Activated B cell treated with CpG ODN at 0.5 μM for 24 hours (primary cell): ENCODE measurements at regions of chr10 and their contacts with region 1.

Region 1: DNA sequence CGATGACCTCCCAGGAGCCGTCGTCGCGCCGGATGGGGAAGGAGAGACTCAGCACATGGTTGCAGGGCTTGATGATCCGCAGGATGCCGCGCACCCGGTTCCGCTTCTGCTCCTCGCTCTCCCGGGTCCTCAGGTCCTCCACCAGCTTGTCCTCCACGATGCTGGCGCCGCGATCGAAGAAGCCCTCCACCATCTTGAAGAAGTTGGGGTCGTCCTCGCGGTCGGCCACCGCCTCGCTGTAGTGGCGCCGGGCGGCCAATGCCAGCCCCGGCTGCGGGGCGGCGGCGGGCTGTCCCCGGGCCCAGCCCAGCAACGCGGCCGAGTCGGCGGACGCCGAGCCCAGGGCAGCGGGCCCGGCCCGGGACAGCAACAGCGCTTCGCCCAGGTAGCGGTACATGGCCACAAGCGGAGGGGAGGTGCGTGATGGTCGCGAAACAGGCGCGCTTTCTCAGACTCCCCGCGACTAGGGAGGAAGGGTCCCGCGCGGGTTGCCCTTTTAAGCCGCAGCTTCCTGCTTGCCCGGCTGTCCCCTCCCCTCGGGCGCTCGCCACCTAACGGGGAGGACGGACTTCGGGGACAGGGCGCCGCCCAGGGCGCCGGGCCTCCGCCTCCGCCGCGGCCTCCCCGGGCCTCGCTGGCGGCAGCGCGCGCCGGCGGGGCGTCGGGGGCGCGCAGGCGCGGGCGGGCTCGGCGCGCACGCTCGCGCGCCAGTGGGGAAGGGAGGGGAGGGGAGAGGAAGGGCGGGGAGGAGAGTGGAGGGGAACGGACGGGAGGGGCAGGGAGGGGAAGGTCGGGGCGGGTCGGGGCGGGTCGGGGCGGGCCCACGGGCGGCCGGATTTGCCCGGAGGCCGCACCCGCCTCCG is at the starts of genes GLUD1 and SHLD2:
- DNase-seq: peak; percentile 89
- ATAC-seq: peak; percentile 76
- H3K4me3 Mint-ChIP-seq: peak within 1 kb of the TSS; percentile 92
- H3K27ac Mint-ChIP-seq: peak within 1 kb of the TSS; percentile 91
- H3K4me1 Mint-ChIP-seq: peaks cover 42% of the 10 kb centered on the region
- H3K27me3 Mint-ChIP-seq: no peaks in the 10 kb centered on the region
- CTCF ChIP-seq: no peak
- total RNA-seq, gene GLUD1: 96.5 and 98.4 TPM in 2 replicates
- total RNA-seq, gene SHLD2: 29.3 and 29.6 TPM in 2 replicates

Region 2: DNA sequence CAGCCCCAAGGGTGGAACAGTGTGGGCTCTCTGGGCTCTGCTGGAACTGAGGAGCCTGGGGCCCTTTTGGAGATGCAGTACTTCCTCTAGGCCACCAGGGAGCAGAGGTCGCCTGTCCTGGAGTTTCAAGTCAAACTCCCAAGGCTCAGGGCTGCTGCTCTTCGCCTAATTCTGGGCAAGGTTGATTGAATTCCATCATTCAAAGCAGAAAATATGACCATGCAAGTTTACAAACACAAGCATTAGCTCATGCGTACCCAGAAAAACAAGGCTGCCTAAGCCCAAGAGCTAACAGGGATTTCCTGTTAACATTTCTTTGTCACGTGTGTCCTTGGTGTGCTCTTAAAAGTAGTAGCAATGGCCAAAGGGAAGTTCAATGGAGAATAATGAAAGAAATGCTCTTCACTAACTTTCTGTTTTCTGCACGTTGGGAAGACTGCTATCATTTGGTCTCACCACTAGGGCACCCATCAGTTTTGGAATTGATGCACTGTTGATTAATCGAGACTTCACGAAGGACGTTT is 406.1 kb before region 1 on chr10:
- CTCF ChIA-PET with region 1: no interaction called
- POLR2A ChIA-PET with region 1: no interaction called
- intact Hi-C with region 1: no loop called
- DNase-seq: peak; percentile 32
- ATAC-seq: peak; percentile 93
- H3K4me3 Mint-ChIP-seq: peak overlapping the region; percentile 24
- H3K27ac Mint-ChIP-seq: no peak overlapping the region
- H3K4me1 Mint-ChIP-seq: peaks cover 2% of the 10 kb centered on the region
- H3K27me3 Mint-ChIP-seq: peaks cover 6% of the 10 kb centered on the region
- CTCF ChIP-seq: peak; percentile 59

Region 3: DNA sequence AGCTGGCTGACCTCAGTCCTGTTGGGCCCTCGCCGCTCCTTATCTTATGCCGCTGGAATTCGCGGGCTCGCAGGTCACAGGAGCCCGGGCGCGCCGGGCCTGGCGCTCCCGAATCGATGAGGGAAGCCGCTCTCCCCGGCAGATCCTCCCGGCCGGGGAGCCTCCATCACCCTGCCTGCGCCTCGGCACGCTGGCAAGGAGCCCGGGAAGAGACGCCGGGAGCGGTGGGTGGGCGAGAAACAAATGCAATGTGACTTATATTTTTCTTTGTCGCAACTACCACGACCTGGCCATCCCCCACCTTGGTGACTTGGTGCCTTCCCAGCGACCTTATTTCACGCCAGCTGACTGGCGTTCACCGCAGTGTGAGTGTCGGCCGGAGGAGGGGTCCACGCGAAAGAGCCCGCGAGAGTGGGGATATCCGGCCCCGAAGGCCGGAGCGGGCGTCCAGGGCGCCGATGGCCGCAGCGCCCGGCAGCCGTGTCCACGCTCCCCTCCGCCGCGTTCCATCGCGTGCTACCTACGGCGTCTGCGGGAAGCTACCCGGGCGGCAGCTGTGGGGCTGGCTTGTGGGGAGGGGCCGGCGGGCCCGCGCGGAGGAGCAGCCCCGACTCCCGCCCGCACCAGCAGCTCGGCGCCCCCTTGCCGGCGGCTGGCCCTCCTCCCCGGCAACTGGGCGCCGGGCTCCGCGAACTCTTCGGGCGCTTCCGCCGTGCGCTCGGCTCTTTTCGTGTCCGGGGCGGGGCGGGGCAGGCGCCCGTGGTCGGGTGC is 338.7 kb before region 1 on chr10:
- CTCF ChIA-PET with region 1: no interaction called
- POLR2A ChIA-PET with region 1: no interaction called
- intact Hi-C with region 1: loop called (anchors 1 kb)
- DNase-seq: peak; percentile 90
- ATAC-seq: peak; percentile 94
- H3K4me3 Mint-ChIP-seq: peak overlapping the region; percentile 86
- H3K27ac Mint-ChIP-seq: peak overlapping the region; percentile 63
- H3K4me1 Mint-ChIP-seq: peaks cover 40% of the 10 kb centered on the region
- H3K27me3 Mint-ChIP-seq: peaks cover 15% of the 10 kb centered on the region
- CTCF ChIP-seq: no peak

Region 4: GRCh38 chr10:86971232-86971991 is 123.2 kb before region 1 on chr10:
- CTCF ChIA-PET with region 1: no interaction called
- POLR2A ChIA-PET with region 1: interaction called, 23 read pairs
- intact Hi-C with region 1: loop called (anchors 1 kb)
- DNase-seq: peak; percentile 91
- ATAC-seq: peak; percentile 88
- H3K4me3 Mint-ChIP-seq: peak overlapping the region; percentile 87
- H3K27ac Mint-ChIP-seq: peak overlapping the region; percentile 86
- H3K4me1 Mint-ChIP-seq: peaks cover 26% of the 10 kb centered on the region
- H3K27me3 Mint-ChIP-seq: peaks cover 4% of the 10 kb centered on the region
- CTCF ChIP-seq: no peak

Region 5: DNA sequence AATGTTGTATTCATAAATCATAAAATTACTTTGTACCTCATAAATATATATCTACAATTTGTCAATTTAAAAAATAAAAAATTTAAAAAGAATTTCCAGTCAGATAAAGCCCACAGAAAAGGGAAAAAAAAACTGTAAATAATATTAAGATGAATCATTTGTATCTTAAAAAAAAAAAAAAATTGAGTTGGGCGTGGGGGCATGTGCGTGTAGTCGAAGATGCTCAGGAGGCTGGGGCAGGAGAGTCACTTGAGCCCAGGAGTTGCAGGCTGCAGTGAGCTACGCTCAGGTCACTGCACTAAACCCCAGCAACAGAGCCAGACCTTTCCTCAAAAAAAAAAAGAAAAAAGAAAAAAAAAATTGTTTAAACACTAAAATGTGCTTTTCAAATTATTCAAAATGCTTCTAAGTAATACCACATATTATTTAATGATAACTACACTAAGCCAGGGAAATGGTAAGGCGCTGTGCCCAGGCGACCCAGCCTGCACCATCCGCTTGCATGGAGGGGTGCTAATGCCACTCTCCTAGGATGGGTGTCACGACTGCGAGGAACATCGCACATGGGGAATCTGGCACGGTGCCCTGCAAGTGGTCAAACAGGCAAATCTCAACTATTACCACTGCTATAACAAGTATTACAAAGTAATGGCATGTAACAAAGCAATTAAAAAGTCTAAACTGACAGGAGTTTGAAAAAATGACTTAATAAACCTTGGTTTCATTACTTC is 15.3 kb before region 1 on chr10:
- CTCF ChIA-PET with region 1: no interaction called
- POLR2A ChIA-PET with region 1: no interaction called
- intact Hi-C with region 1: loop called (anchors 1 kb)
- DNase-seq: no peak
- ATAC-seq: no peak
- H3K4me3 Mint-ChIP-seq: no peak overlapping the region
- H3K27ac Mint-ChIP-seq: no peak overlapping the region
- H3K4me1 Mint-ChIP-seq: peaks cover 24% of the 10 kb centered on the region
- H3K27me3 Mint-ChIP-seq: no peaks in the 10 kb centered on the region
- CTCF ChIP-seq: no peak